Natural killer cell (primary cell): ENCODE measurements at regions of chr2 and their contacts with region 1.

Region 1: GRCh38 chr2:99489761-99490622 is at the start of gene REV1:
- DNase-seq: peak; percentile 92 to 97
- ATAC-seq: peak; percentile 80 to 93 (median 84)
- H3K4me3 ChIP-seq: peak within 1 kb of the TSS; percentile 84
- H3K4me3 Mint-ChIP-seq: peak within 1 kb of the TSS; percentile 98
- H3K27ac ChIP-seq: peak within 1 kb of the TSS; percentile 87
- H3K27ac Mint-ChIP-seq: peak within 1 kb of the TSS; percentile 95 to 97
- H3K4me1 ChIP-seq: peaks cover 10% of the 10 kb centered on the region
- H3K4me1 Mint-ChIP-seq: peaks cover 29 to 33% of the 10 kb centered on the region in 2 donors
- H3K27me3 ChIP-seq: no peaks in the 10 kb centered on the region
- H3K27me3 Mint-ChIP-seq: peaks cover 8 to 11% of the 10 kb centered on the region in 2 donors
- CTCF ChIP-seq: peak; percentile 79
- total RNA-seq, gene REV1: 34.7 to 49.1 (median 38.5) TPM

Region 2: GRCh38 chr2:99085421-99085820 is 404.6 kb before region 1 on chr2:
- intact Hi-C with region 1: loop called (anchors 5 kb)
- DNase-seq: peak in 1 of 2 donors; percentile 42
- ATAC-seq: peak in 1 of 3 donors; percentile 42
- H3K4me3 ChIP-seq: no peak overlapping the region
- H3K4me3 Mint-ChIP-seq: no peak overlapping the region
- H3K27ac ChIP-seq: no peak overlapping the region
- H3K27ac Mint-ChIP-seq: no peak overlapping the region
- H3K4me1 ChIP-seq: no peaks in the 10 kb centered on the region
- H3K4me1 Mint-ChIP-seq: peaks cover 5 to 6% of the 10 kb centered on the region in 2 donors
- H3K27me3 ChIP-seq: peaks cover 6% of the 10 kb centered on the region
- H3K27me3 Mint-ChIP-seq: peaks cover 30 to 60% of the 10 kb centered on the region in 2 donors
- CTCF ChIP-seq: peak; percentile 50

Region 3: DNA sequence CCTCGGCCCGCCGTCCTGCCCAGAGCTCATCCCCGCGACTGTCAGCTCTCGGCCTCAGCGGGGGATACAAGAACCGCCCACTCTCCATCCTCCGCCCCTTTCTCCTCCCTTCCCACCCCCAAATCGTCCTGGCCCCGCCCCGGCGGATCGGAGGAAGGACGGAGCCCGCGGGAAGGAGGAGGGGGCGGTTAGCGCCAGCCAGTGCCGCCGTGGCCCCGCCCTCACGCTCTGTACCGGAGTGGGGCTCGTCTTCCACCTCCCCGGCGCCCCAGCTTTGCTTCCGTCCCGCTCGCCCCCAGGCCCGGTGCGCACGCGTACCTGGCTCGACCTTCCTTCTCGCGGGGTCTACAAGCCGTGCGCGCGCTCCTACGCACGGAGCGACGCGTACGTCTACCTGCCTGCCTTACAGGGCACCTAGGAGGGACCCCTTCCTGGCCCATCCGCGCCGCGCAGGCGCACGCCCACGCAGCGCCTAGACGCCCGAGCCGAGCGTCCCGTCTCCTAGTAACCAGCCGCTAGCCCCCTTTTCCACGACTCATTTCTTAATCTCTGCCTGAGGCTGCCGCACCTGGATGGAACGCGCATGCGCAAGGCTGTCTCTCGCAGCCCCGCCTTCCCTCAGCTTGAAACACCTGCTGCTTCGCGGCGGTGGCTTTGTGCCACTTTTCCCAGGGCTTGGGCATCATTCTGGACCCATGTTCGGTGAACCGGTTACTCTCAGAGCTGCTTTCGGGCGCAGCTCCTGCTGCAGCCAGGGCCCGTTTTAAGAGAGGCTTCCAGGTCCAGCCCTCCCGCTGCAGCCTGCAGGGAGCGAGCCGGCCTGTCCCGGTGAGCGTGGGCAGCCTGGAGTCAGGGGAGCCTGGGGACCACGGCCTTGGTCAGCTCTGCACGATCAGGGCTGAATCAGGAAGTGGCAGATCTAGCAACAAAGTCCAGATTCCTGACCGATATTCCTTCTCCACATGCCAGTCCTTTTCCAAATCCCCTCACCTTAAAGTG is 348.6 kb before region 1 on chr2 and contains the start of gene C2orf15:
- intact Hi-C with region 1: loop called (anchors 1 kb)
- DNase-seq: peak; percentile 85 to 98
- ATAC-seq: peak; percentile 89 to 97 (median 91)
- H3K4me3 ChIP-seq: peak within 1 kb of the TSS; percentile 96
- H3K4me3 Mint-ChIP-seq: peak within 1 kb of the TSS; percentile 97
- H3K27ac ChIP-seq: peak within 1 kb of the TSS; percentile 95
- H3K27ac Mint-ChIP-seq: peak within 1 kb of the TSS; percentile 96 to 100
- H3K4me1 ChIP-seq: peaks cover 9% of the 10 kb centered on the region
- H3K4me1 Mint-ChIP-seq: peaks cover 23 to 25% of the 10 kb centered on the region in 2 donors
- H3K27me3 ChIP-seq: no peaks in the 10 kb centered on the region
- H3K27me3 Mint-ChIP-seq: no peaks in the 10 kb centered on the region
- CTCF ChIP-seq: no peak
- total RNA-seq, gene C2orf15: 1.3 to 2.6 (median 1.9) TPM

Region 4: DNA sequence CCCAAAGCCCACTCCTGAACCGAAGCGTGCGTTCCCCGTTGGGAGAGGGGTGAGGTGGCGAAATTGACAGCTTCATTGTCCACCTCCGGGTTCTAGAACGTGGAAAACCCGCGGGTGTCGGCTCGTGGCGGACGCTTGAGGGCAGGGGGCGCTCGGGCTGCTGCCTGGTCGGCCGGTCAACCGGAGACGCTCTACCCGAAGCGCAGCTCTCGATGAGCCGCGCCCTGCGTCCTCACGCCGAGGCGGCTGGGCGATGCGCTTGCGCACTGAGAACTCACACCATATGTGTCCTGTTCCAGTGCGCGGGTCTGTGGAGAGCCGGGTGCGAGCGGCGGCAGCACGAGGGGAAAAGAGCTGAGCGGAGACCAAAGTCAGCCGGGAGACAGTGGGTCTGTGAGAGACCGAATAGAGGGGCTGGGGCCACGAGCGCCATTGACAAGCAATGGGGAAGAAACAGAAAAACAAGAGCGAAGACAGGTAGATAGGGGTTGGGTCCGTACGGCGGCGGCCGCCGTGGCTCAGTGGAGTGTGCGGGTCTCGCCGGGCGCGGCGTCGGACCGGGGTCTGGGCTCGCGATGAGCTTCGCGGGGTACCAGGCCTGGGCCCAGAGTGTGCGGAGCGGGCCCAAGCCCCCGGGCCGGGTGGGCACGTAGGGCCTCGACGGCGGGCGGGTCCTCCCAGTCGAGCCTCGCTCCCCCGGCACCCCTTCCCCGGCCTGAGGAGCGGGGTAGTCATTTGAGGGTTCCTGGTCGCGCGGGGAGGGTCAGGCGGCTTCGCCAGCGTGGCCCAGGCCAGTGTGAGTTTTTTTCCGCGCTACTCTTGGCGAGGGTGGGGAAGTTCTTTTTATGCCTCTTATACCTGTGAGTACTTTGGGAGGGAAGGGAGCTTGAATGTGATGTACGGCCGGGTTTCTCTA is 152.6 kb before region 1 on chr2 and contains the start of gene EIF5B:
- intact Hi-C with region 1: loop called (anchors 1 kb)
- DNase-seq: peak; percentile 86 to 96
- ATAC-seq: peak; percentile 67 to 83 (median 72)
- H3K4me3 ChIP-seq: peak within 1 kb of the TSS; percentile 79
- H3K4me3 Mint-ChIP-seq: no peak within 1 kb of the TSS
- H3K27ac ChIP-seq: peak within 1 kb of the TSS; percentile 83
- H3K27ac Mint-ChIP-seq: no peak within 1 kb of the TSS
- H3K4me1 ChIP-seq: peaks cover 15% of the 10 kb centered on the region
- H3K4me1 Mint-ChIP-seq: peaks cover 12 to 32% of the 10 kb centered on the region in 2 donors
- H3K27me3 ChIP-seq: no peaks in the 10 kb centered on the region
- H3K27me3 Mint-ChIP-seq: no peaks in the 10 kb centered on the region
- CTCF ChIP-seq: peak; percentile 48
- total RNA-seq, gene EIF5B: 33.5 to 40.6 (median 40.3) TPM